ENCODE measurements at regions of chr17 and their contacts with region 1.

Region 1: GRCh38 chr17:2214047-2214928 is 89.3 kb downstream of the SMG6 start:
- DNase-seq: peak in 8 of 10 donors; percentile 39 to 91 (median 54)

Region 2: GRCh38 chr17:2179615-2180295 is 34.5 kb before region 1 on chr17:
- intact Hi-C with region 1: loop called (anchors 5 kb)
- DNase-seq: peak in 7 of 10 donors; percentile 27 to 86 (median 51)

Region 3: DNA sequence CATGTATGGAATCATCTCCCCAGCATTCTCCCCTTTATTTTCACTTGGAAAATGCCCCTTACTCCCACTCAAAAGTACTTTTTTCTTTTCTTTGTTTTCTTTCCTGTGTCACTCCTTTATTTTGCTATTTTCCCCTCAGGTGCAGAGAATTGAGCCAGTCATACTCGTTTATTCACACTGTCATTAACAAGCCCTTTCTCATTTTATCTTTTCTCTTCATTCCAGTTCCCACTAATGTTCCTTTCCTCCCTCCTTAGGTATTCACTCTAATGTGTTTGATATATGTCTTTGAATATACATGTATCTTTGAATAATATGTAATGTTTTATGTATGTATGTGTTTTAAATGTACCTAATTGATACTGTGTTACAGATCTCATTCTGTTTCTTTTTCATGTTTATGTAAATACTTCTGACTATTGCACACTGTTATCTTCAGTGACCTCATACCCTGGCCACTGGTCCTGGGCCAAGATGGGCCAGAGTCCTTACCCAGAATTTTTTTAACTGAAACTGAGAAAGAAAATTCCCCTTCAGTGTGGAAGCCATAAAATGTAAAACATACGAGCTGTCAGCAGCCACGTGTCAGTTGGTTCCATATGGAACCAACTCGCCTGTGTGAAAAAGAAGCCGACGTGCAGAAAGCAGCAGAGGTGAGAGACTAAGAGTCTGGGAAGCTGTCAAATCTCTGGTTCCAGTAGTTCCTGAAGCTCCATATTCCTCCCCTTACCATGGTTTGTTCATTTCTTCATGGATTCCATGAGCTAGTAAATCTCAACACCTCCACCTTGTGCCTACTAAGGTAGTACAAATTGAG is 95.3 kb after region 1 on chr17:
- intact Hi-C with region 1: no loop called
- DNase-seq: peak in 2 of 10 donors; percentile 7 to 47